ENCODE measurements at regions of chr13 and their contacts with region 1.

Region 1: GRCh38 chr13:31431722-31432137 is 232.0 kb downstream of the B3GLCT start:
- DNase-seq: peak; percentile 53 to 83 (median 65)
- ATAC-seq: peak; percentile 57 to 78
- H3K4me3 ChIP-seq: no peak overlapping the region
- H3K27ac ChIP-seq: no peak overlapping the region
- H3K4me1 ChIP-seq: no peaks in the 10 kb centered on the region
- H3K27me3 ChIP-seq: no peaks in the 10 kb centered on the region

Region 2: GRCh38 chr13:31380715-31381114 is 51.0 kb before region 1 on chr13:
- intact Hi-C with region 1: no loop called
- DNase-seq: no peak
- ATAC-seq: no peak
- H3K4me3 ChIP-seq: no peak overlapping the region
- H3K27ac ChIP-seq: no peak overlapping the region
- H3K4me1 ChIP-seq: no peaks in the 10 kb centered on the region
- H3K27me3 ChIP-seq: no peaks in the 10 kb centered on the region

Region 3: GRCh38 chr13:31747291-31747690 is 315.6 kb after region 1 on chr13:
- intact Hi-C with region 1: loop called in 3 of 4 experiments (anchors 2 to 5 kb)
- DNase-seq: no peak
- ATAC-seq: no peak
- H3K4me3 ChIP-seq: no peak overlapping the region
- H3K27ac ChIP-seq: no peak overlapping the region
- H3K4me1 ChIP-seq: no peaks in the 10 kb centered on the region
- H3K27me3 ChIP-seq: no peaks in the 10 kb centered on the region

Region 4: DNA sequence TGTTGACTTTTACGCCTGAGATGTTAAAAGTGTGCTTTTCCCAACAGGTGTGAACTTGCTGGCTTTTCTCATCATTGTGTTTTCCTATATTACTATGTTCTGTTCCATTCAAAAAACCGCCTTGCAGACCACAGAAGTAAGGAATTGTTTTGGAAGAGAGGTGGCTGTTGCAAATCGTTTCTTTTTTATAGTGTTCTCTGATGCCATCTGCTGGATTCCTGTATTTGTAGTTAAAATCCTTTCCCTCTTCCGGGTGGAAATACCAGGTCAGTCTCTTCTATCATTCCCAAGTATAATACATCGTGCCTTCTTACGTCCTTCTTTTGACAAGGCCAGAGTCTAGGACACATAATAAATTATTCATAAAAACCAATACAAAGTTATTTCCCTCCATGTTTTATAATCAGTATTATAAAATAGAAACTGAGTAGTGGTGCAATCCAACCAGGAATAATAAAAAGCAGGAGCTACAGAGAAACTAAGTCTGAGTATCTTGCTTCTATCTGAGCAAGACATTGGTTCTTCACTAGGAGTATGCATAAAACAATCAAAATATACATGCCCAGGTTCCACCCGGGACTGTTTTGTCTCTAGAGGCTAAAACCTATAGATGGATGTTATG is 365.5 kb after region 1 on chr13:
- intact Hi-C with region 1: loop called in 1 of 4 experiments (anchors 10 kb)
- DNase-seq: no peak
- ATAC-seq: peak in 1 of 2 donors; percentile 18
- H3K4me3 ChIP-seq: no peak overlapping the region
- H3K27ac ChIP-seq: no peak overlapping the region
- H3K4me1 ChIP-seq: no peaks in the 10 kb centered on the region
- H3K27me3 ChIP-seq: no peaks in the 10 kb centered on the region

Measured in right cardiac atrium (tissue), 5 donors.